HEK293 (cell line): ENCODE measurements at regions of chr17 and their contacts with region 1.

Region 1: DNA sequence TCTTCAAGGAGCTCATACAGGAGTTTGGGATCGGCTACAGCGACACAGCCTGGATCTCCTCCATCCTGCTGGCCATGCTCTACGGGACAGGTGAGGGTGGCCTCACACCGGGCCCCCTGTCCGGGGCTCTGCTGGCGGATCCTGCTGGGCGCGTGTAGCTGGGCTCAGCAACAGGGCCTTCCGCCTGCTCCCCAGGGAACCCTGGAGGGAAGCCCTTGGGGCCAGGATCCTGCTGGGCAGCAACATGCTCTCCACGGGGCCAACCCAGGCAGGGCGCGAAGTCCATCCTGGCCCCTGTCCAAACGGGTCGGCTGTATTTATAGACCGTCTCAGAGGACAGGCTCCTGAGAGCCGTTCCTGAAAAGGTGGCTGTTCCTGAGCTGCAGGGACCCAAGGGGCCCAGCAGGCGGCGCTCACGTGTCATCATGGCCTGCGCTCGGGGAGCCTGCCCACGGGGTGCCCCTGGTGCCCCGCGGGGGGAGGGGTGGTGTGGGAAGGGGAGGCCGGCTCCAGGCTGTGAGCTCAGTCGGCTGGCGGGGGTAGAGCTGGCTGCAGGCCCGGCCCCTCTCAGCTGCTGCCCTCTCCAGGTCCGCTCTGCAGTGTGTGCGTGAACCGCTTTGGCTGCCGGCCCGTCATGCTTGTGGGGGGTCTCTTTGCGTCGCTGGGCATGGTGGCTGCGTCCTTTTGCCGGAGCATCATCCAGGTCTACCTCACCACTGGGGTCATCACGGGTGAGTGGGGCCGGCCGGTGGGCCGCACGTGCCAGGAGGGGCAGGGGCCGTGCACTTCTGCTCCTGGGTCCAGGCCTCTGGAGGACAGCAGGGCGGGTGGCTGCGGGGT is 7.5 kb downstream of the SLC16A3 start:
- H3K4me3 ChIP-seq: no peak overlapping the region
- H3K27ac ChIP-seq: no peak overlapping the region; the same call in 1 of the 2 replicates
- H3K4me1 ChIP-seq: peaks cover 15% of the 10 kb centered on the region
- CTCF ChIP-seq: peak; percentile 89

Region 2: DNA sequence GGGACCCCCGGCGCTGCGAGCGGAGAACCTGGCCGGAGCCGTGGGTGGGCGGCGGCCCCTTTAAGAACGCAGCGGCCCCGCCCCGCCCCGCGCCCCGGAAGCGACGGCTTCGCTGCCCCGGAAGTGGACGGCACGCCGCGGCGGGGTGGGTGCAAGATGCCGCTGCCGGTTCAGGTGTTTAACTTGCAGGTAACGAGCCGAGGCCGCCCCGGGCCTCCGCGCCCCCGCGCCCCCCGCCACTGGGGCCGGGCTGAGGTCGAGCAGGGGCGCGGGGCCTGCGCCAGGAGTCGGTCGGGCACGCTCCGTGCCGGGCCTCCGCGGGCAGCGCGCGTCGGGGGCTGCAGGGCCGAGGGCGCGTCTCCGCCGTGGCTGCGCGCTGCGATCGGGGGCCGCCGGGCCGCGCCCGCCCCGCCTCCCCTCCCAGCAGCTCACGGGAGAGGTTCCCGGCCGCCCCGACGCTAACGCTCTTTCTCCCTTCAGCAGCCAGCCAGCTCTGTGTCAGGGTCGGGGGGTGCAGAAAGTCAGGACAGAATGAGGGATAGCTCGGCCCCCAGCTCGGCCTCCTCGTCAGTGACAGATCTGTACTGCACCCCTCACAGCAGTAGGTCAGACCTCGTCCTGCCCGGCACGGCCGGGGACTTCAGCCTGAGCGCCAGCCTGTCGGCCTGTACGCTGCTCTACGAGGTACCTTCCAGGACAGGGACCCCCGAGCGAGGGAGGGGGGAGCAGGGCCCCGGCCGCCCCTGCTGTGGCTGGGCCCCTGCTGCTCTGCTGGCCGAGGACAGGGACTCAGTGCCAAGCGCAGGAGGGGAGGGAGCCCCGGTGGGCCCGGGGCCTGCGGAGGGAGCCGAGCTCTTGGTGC is 184.4 kb before region 1 on chr17 and contains the starts of genes GPS1 and RFNG:
- CTCF ChIA-PET with region 1: no interaction called
- POLR2A ChIA-PET with region 1: no interaction called
- H3K4me3 ChIP-seq: peak within 1 kb of the TSS; percentile 83
- H3K27ac ChIP-seq: peak within 1 kb of the TSS; percentile 73
- H3K4me1 ChIP-seq: peaks cover 7% of the 10 kb centered on the region
- CTCF ChIP-seq: no peak

Region 3: DNA sequence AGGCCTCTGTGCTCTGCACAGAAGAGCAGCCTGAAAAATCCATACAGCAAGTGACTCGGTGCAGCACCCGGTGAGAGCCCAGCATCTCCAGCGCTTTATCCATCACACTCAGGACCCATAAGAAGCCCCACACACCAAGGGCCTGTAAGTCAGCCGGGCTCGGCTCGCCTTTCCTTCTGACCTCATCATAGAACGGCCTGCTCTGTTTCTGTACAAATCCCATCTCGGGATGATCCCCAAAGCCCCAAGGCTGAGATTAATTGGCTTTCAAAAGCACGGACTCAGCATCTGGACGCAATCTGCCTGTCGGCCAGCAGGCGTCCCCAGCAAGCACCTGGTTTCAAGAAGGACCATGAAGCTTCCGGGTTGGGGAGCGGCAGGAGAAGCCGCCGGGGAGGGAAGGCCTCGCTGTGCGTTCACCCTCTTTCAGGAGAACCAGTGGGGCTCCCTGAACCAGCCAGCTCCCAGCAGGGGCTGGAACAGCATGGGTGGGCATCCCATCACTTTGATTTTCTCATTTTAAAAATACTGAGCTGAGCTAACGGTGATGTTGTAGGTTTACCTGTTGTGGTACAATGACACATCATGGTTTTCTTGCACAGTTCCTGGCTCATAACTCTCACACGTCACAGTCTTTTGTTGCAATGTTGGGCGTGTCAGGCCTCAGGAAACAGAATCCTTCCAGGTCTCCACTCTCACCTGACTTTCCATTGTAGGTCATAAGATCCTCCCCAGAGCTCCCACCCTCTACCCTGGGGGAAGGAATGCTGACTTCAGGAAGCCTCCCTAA is 30.4 kb before region 1 on chr17:
- CTCF ChIA-PET with region 1: interaction called, 12 read pairs
- POLR2A ChIA-PET with region 1: interaction called, 8 read pairs
- H3K4me3 ChIP-seq: no peak overlapping the region
- H3K27ac ChIP-seq: peak overlapping the region; percentile 26; the same call in 1 of the 2 replicates
- H3K4me1 ChIP-seq: peaks cover 5% of the 10 kb centered on the region; the same call in 1 of the 2 replicates
- CTCF ChIP-seq: peak; percentile 77

Region 4: GRCh38 chr17:82247175-82247823 is 10.9 kb after region 1 on chr17:
- CTCF ChIA-PET with region 1: interaction called, 15 read pairs
- POLR2A ChIA-PET with region 1: interaction called, 4 read pairs
- H3K4me3 ChIP-seq: no peak overlapping the region
- H3K27ac ChIP-seq: peak overlapping the region; percentile 32; the same call in 1 of the 2 replicates
- H3K4me1 ChIP-seq: no peaks in the 10 kb centered on the region
- CTCF ChIP-seq: no peak

Region 5: GRCh38 chr17:82292251-82293154 is 56.1 kb after region 1 on chr17:
- CTCF ChIA-PET with region 1: interaction called, 8 read pairs
- POLR2A ChIA-PET with region 1: interaction called, 13 read pairs
- H3K4me3 ChIP-seq: peak overlapping the region; percentile 57
- H3K27ac ChIP-seq: peak overlapping the region; percentile 78
- H3K4me1 ChIP-seq: peaks cover 13% of the 10 kb centered on the region
- CTCF ChIP-seq: no peak

Region 6: GRCh38 chr17:82528484-82529265 is 292.3 kb after region 1 on chr17:
- CTCF ChIA-PET with region 1: no interaction called
- POLR2A ChIA-PET with region 1: interaction called, 13 read pairs
- H3K4me3 ChIP-seq: no peak overlapping the region
- H3K27ac ChIP-seq: peak overlapping the region; percentile 17
- H3K4me1 ChIP-seq: peaks cover 40% of the 10 kb centered on the region
- CTCF ChIP-seq: peak; percentile 80